ENCODE measurements at regions of chr12 and their contacts with region 1.

Region 1: GRCh38 chr12:90712671-90713070 is 242.3 kb downstream of the CCER1 start:
- DNase-seq: peak; percentile 48
- H3K4me3 ChIP-seq: no peak overlapping the region
- H3K27ac ChIP-seq: no peak overlapping the region
- H3K4me1 ChIP-seq: peaks cover 5% of the 10 kb centered on the region
- H3K27me3 ChIP-seq: no peaks in the 10 kb centered on the region
- CTCF ChIP-seq: no peak
- POLR2A ChIP-seq: no peak

Region 2: GRCh38 chr12:90672081-90672480 is 40.6 kb before region 1 on chr12:
- CTCF ChIA-PET with region 1: no interaction called
- POLR2A ChIA-PET with region 1: no interaction called
- dilution Hi-C with region 1: no loop called
- intact Hi-C with region 1: no loop called
- DNase-seq: peak; percentile 51
- H3K4me3 ChIP-seq: no peak overlapping the region
- H3K27ac ChIP-seq: no peak overlapping the region
- H3K4me1 ChIP-seq: peaks cover 5% of the 10 kb centered on the region
- H3K27me3 ChIP-seq: no peaks in the 10 kb centered on the region
- CTCF ChIP-seq: no peak
- POLR2A ChIP-seq: no peak

Region 3: DNA sequence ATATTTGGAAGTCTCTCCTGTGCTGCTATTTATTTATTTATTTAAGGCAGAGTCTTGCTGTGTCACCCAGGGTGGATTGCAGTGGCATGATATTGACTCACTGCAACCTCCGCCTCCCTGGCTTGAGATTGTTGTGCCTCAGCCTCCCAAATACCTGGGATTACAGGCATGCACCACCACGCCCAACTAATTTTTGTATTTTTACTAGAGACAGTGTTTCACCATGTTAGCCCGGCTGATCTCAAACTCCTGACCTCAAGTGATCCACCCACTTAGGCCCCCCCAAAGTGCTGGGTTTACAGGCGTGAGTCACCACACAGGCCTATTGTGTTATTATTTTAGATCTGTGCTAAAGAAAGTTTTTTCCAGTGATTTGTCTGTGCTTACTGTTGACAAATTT is 17.1 kb after region 1 on chr12:
- CTCF ChIA-PET with region 1: interaction called, 4 read pairs
- POLR2A ChIA-PET with region 1: interaction called, 10 read pairs
- dilution Hi-C with region 1: no loop called
- intact Hi-C with region 1: no loop called
- DNase-seq: peak; percentile 26
- H3K4me3 ChIP-seq: no peak overlapping the region
- H3K27ac ChIP-seq: no peak overlapping the region
- H3K4me1 ChIP-seq: no peaks in the 10 kb centered on the region
- H3K27me3 ChIP-seq: no peaks in the 10 kb centered on the region
- CTCF ChIP-seq: no peak
- POLR2A ChIP-seq: no peak

Measured in endothelial cell of umbilical vein (primary cell).